Activated T-helper 1 cell treated with anti-CD3 and anti-CD28 coated beads, Interleukin-12 subunit alpha, Interleukin-12 subunit beta, Interleukin-2, Interleukin-4 antibody, amounts not matched to agents 30 ng/mL and 10 ng/mL and 1 ng/mL, durations not matched to agents 14 hours and 24 hours and 36 hours (primary cell): ENCODE measurements at regions of chr12 and their contacts with region 1.

Region 1: DNA sequence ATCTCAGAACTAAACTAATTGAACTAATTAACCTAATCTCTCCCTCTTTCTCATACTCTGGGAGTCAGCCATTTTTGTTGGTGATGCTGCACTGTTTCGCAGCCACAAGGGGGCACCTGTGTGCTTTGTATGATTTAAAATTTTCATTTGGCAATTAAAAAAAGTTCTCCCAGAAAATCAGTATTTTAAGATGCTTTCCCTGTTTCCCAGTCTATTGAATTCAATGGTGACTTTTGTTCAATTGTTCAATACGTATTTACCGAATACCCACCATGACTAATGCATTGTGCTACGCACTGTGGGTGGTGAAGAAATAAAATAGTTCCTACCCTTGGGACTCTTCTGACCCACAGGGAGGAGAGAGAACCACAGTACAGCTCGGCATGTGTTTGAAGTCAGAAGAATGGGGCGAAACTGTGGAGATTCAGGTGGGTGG is 63.7 kb downstream of the ZNF664 start:
- DNase-seq: no peak
- H3K4me3 Mint-ChIP-seq: no peak overlapping the region
- H3K27ac Mint-ChIP-seq: no peak overlapping the region
- H3K4me1 Mint-ChIP-seq: no peaks in the 10 kb centered on the region
- H3K27me3 Mint-ChIP-seq: peaks cover 14% of the 10 kb centered on the region

Region 2: GRCh38 chr12:123877968-123878367 is 158.7 kb before region 1 on chr12:
- intact Hi-C with region 1: no loop called
- DNase-seq: no peak
- H3K4me3 Mint-ChIP-seq: no peak overlapping the region
- H3K27ac Mint-ChIP-seq: no peak overlapping the region
- H3K4me1 Mint-ChIP-seq: no peaks in the 10 kb centered on the region
- H3K27me3 Mint-ChIP-seq: peaks cover 4% of the 10 kb centered on the region

Region 3: DNA sequence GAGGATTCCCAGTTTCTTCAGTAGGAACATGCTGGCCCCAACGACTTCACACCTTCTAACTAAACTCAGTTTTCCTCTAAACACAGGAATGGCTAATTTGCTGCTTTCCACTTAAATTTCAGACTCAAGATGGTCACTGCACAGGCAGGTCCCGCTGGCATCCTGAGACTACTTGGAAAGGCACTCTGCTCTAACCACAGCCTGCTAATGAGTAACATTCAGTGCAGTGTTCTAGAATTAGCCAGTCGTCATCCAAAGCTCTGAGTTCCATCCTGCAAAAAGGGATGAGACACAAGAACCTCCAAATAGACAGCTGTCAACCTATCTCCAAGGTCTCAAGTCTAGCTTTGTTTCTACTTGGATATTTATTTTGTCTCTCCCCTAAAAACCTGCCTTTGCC is 70.1 kb before region 1 on chr12:
- intact Hi-C with region 1: no loop called
- DNase-seq: no peak
- H3K4me3 Mint-ChIP-seq: no peak overlapping the region
- H3K27ac Mint-ChIP-seq: no peak overlapping the region
- H3K4me1 Mint-ChIP-seq: peaks cover 26% of the 10 kb centered on the region
- H3K27me3 Mint-ChIP-seq: peaks cover 19% of the 10 kb centered on the region

Region 4: DNA sequence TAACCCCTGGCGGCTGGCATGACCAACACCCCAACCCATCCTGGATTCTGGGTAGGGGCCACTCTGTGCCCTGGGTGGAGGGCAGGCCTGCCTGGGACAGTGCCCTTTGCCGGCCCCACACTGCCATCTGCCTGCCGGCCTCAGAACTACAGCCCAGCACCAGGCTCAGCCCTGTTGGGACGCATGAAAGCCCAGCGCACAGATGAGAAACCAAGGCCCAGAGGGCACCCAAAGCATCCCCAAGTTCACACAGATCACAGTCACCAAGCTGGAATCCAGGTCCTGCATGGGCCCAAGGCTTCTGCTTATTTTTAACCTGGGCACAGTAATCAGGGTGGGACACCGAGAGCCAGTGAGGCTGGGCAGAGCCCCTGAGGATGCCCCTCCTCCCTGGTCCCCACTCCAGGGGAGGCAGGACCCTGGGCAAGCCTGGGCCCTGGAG is 284.4 kb after region 1 on chr12:
- intact Hi-C with region 1: loop called (anchors 1 kb)
- DNase-seq: peak; percentile 52
- H3K4me3 Mint-ChIP-seq: no peak overlapping the region
- H3K27ac Mint-ChIP-seq: no peak overlapping the region
- H3K4me1 Mint-ChIP-seq: no peaks in the 10 kb centered on the region
- H3K27me3 Mint-ChIP-seq: no peaks in the 10 kb centered on the region

Region 5: GRCh38 chr12:124898200-124898922 is 861.7 kb after region 1 on chr12:
- intact Hi-C with region 1: loop called (anchors 1 kb)
- DNase-seq: peak; percentile 45
- H3K4me3 Mint-ChIP-seq: no peak overlapping the region
- H3K27ac Mint-ChIP-seq: no peak overlapping the region
- H3K4me1 Mint-ChIP-seq: peaks cover 21% of the 10 kb centered on the region
- H3K27me3 Mint-ChIP-seq: peaks cover 5% of the 10 kb centered on the region